Mammary epithelial cell (primary cell): ENCODE measurements at regions of chr1 and their contacts with region 1.

Region 1: DNA sequence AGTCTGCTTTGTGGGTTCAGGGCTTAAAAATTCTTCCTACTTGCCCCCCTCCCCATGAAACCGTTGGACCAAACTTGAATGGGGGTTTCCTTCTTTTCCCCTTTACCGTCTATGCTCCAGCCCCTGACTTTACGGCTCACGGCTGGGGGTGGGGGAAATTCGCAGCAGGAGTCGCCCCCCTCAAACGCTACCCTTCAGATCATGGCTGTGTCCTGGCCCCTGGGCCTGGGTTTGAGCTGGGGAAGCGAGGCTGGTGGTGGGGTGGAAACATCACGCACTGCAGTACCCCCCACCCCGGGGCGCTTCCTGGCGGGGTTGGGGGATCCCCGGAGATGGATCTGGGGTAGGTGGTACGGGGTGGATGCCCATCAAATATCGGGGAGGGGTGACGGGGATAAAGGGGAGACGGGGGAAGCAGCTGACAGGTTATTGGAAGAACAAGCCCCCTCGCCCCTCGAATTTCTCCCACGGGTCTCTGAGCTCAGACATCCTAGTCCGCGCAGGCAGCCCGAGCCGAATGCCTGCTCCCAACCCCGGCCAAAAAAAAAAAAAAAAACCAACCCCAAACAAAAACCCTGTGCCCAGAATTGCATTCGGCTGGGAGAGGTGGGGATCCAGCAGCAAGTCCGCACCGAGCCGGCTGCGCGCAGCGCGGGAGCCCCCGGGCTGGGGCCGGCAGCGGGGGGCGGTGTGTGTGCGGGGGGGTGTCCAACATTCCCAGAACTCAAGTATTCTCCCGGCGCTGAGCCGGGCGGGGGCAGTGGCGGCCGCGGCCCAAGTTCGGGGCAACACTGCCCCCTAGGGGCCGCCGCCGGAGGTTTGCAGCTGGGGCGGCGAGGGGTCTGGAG is 59.0 kb upstream of the ACOT11 start:
- DNase-seq: peak; percentile 60
- H3K4me3 ChIP-seq: peak overlapping the region; percentile 52 to 79 (median 58)
- H3K27ac ChIP-seq: peak overlapping the region; percentile 72
- H3K4me1 ChIP-seq: peaks cover 26% of the 10 kb centered on the region
- H3K27me3 ChIP-seq: no peaks in the 10 kb centered on the region
- CTCF ChIP-seq: peak; percentile 44 to 90

Region 2: DNA sequence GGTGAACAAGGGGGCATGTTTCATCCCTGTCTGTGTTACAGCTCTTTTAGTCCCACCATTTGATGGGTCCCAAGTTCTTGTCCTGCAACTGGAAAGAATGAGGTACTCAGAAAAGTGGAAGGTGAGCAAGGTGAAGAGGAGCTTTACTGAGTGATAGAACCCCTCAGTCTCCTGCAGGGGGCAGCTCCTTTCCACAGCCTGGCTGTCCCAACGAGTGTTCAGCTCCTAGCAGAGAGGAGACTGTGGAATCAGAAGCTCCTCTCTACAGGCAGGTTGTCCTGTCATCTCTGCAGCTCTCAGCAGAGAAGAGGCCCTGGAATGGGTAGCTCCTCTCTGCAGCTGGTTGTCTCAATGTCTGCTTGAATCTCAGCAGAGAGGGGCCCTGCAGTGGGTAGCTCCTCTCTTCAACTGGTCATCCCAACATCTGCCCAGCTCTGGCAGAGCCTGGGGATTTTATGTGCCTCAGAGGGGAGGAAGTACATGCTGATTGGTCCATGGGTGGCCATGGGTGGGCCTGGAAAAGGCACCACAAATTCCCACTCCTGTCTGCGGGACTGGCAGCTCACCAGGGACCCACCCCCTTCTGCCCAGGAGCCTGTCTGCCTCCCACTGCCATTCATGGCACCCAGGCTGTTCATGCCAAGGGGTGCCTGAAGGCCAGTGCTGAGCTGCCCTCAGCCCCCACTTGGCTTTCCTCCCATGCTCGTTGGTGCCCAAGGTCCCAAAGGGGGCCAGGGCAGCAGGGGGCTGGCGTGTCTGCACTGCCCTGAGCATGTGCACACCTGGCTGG is 496.7 kb before region 1 on chr1:
- CTCF ChIA-PET with region 1: no interaction called
- dilution Hi-C with region 1: no loop called
- in situ Hi-C with region 1: no loop called
- intact Hi-C with region 1: loop called (anchors 5 kb)
- DNase-seq: no peak
- H3K4me3 ChIP-seq: no peak overlapping the region
- H3K27ac ChIP-seq: no peak overlapping the region
- H3K4me1 ChIP-seq: no peaks in the 10 kb centered on the region
- H3K27me3 ChIP-seq: peaks cover 3% of the 10 kb centered on the region
- CTCF ChIP-seq: peak; percentile 32 to 64

Region 3: GRCh38 chr1:54199765-54200518 is 289.1 kb before region 1 on chr1 and contains the starts of genes CYB5RL and MRPL37:
- CTCF ChIA-PET with region 1: no interaction called
- dilution Hi-C with region 1: no loop called
- in situ Hi-C with region 1: no loop called
- intact Hi-C with region 1: loop called (anchors 1 kb)
- DNase-seq: peak; percentile 96
- H3K4me3 ChIP-seq: peak within 1 kb of the TSS; percentile 73 to 91 (median 76)
- H3K27ac ChIP-seq: peak within 1 kb of the TSS; percentile 36
- H3K4me1 ChIP-seq: peaks cover 16% of the 10 kb centered on the region
- H3K27me3 ChIP-seq: no peaks in the 10 kb centered on the region
- CTCF ChIP-seq: no peak
- total RNA-seq, gene CYB5RL: 1.7 to 4.0 TPM
- total RNA-seq, gene MRPL37: 90.9 to 96.2 TPM

Region 4: DNA sequence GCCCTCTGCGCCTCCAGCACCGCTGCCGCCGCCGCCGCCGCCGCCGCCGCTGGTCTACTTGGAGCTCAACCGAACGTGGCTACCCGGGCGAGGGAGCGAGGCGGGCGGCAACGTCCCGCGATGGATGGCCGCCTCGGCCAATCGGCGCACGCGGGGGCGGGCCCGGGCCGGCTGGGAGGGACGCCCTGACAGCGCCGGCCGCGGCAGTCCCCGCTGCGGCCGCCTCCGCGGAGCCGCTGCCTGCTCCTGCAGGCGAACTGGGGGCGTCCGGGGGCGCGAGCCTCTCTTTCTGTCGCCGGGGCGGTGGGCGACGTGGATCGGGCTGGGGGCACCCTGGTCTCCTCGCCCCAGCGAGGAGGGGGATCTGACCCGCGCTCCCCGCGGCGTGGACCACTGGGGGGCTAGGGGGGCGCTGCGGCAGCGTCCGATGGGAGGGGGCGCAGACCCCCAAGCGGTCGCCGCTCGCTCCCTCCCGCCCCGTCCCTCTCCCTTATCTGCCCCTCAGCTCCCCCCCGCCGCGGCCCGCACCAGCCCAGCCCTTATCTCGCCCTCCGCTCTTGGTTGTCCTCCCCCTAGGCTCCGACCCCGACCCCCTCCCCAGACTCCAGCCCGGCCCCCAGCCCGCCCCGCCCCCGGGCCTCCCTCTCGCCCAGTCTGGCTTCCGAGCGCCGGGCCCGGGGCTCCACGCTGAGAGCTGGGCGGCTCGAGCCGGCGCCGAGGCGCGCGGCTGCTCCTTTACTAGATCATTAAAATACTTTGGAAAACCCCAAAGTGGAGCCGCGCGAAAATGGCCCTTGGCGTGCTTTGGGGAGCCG is 82.5 kb before region 1 on chr1 and contains the start of gene SSBP3:
- CTCF ChIA-PET with region 1: interaction called, 8 read pairs
- dilution Hi-C with region 1: loop called (anchors 5 kb)
- in situ Hi-C with region 1: loop called (anchors 5 kb)
- intact Hi-C with region 1: loop called (anchors 1 kb)
- DNase-seq: peak; percentile 95
- H3K4me3 ChIP-seq: peak within 1 kb of the TSS; percentile 60 to 86 (median 64)
- H3K27ac ChIP-seq: peak within 1 kb of the TSS; percentile 84
- H3K4me1 ChIP-seq: peaks cover 49% of the 10 kb centered on the region
- H3K27me3 ChIP-seq: no peaks in the 10 kb centered on the region
- CTCF ChIP-seq: peak in 1 of 2 donors; percentile 2
- total RNA-seq, gene SSBP3: 30.5 to 30.6 TPM

Region 5: GRCh38 chr1:54542120-54542961 is 53.3 kb after region 1 on chr1:
- CTCF ChIA-PET with region 1: no interaction called
- dilution Hi-C with region 1: no loop called
- in situ Hi-C with region 1: loop called in 1 of 2 experiments (anchors 5 kb)
- intact Hi-C with region 1: no loop called
- DNase-seq: peak; percentile 99
- H3K4me3 ChIP-seq: peak overlapping the region; percentile 45 to 59 (median 47)
- H3K27ac ChIP-seq: peak overlapping the region; percentile 96
- H3K4me1 ChIP-seq: peaks cover 34% of the 10 kb centered on the region
- H3K27me3 ChIP-seq: no peaks in the 10 kb centered on the region
- CTCF ChIP-seq: peak in 1 of 2 donors; percentile 25